ENCODE measurements at regions of chr17 and their contacts with region 1.

Region 1: DNA sequence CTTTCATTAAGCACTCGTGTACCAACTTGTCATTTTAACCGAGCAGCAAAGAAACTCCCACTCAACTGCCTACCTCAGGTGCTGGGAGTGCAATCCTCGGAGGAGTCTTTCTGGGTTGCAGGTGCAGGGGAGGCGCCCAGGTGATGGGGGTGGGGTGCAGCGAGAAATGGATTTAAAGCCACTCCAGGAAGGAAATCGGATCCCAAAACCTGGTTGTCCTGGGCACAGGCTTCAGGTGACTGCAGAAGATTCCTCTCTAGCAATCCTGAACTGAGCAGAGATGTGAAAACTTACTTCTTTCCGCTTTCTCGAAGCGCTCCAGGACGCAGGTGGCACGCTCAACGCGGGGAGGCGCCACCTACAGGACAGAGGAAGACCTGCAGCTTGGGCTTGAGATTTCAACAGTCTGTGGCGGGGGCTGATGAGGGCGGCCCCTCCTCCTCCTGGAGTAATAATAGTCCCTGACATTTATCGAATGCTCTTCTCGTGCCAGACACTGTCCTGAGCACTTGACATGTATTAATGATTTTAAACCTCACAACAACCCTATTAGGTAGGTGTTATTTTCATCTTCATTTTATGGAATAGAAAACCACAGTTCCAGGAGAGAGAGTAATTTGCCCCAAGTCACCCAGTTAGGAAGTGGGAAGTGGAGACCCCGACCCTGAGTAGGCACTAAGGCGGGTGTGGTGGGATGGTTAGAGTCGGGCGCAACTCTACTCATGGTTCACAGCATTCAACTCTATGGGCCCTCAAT is 27.2 kb upstream of the SKAP1 start:
- DNase-seq: peak; percentile 84
- H3K4me3 ChIP-seq: no peak overlapping the region
- H3K27ac ChIP-seq: no peak overlapping the region
- H3K4me1 ChIP-seq: peaks cover 10% of the 10 kb centered on the region
- H3K27me3 ChIP-seq: no peaks in the 10 kb centered on the region
- CTCF ChIP-seq: peak; percentile 99

Region 2: DNA sequence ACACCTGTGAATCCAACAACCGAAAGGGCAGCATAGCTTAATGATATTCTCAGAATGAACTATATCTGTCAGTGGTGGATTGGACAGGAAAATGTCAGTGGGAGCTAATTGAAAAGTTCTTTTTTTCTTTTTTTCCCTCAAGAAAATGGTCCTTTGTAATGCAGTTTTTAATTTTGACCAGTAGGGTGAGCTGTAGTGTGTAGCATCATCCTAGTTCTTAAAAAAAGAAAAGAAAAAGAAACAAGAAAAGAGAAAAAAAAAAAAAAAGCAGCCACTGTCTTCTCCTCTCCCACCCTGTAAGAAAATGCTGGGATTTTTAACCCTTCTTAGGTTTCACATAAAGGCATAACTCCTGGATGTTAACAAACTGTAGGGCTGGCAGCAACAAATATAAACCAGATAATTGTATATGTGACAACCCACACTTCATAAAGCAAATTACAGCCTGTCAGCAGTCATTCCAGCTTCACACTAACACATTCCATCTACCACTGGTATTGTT is 105.4 kb before region 1 on chr17:
- CTCF ChIA-PET with region 1: no interaction called
- POLR2A ChIA-PET with region 1: no interaction called
- intact Hi-C with region 1: loop called (anchors 5 kb)
- DNase-seq: peak; percentile 69
- H3K4me3 ChIP-seq: no peak overlapping the region
- H3K27ac ChIP-seq: no peak overlapping the region
- H3K4me1 ChIP-seq: peaks cover 4% of the 10 kb centered on the region
- H3K27me3 ChIP-seq: peaks cover 3% of the 10 kb centered on the region
- CTCF ChIP-seq: peak; percentile 81

Region 3: DNA sequence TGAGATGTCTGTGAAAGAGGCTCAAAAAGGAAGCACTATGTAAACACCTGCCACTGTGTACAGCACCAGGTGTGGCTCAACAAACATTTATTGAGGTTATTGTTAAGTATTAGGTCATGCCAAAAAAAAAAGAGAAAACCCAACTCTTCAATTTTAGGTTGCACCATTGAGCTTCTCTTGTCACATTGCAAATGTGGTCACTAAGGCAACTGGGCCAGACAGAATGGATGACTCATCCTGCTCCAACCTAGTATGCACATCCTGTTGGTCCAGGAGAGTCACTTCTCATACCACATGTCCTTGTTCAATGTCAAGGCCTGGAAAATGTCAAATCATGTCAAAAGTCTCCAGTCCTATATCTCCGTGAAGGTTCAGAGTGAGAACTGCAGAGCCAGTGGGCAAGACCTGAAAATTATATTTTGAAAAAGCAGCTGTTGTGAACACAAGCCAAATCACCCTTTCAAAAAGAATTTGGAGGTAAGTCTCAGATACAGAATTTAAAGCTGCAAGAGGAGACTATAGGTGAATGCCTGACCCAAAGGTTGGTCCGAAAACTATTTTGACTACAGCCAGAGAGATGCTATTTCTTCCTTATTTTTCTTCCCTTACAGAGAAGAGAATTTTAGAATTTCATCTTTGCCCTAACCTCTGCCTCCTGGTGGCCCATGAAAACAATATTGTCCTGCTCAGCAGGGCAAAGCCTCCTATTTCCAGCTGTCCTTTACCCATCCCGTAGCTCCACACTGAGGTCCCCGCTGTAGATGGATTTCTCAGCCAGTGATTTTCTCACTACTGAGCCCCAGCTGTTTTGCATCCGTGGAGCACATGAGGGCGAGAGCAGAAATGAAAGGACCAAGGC is 48.8 kb after region 1 on chr17:
- CTCF ChIA-PET with region 1: no interaction called
- POLR2A ChIA-PET with region 1: no interaction called
- intact Hi-C with region 1: no loop called
- DNase-seq: peak; percentile 55
- H3K4me3 ChIP-seq: no peak overlapping the region
- H3K27ac ChIP-seq: no peak overlapping the region
- H3K4me1 ChIP-seq: no peaks in the 10 kb centered on the region
- H3K27me3 ChIP-seq: no peaks in the 10 kb centered on the region
- CTCF ChIP-seq: no peak

Region 4: GRCh38 chr17:48618256-48618897 is 161.1 kb after region 1 on chr17:
- CTCF ChIA-PET with region 1: no interaction called
- POLR2A ChIA-PET with region 1: no interaction called
- intact Hi-C with region 1: no loop called
- DNase-seq: peak; percentile 93
- H3K4me3 ChIP-seq: peak overlapping the region; percentile 49
- H3K27ac ChIP-seq: no peak overlapping the region
- H3K4me1 ChIP-seq: peaks cover 17% of the 10 kb centered on the region
- H3K27me3 ChIP-seq: no peaks in the 10 kb centered on the region
- CTCF ChIP-seq: peak; percentile 98